ENCODE measurements at regions of chr12 and their contacts with region 1.

Region 1: GRCh38 chr12:103626498-103626897 is 39.4 kb downstream of the STAB2 start:
- DNase-seq: peak in 3 of 5 donors; percentile 31 to 47 (median 37)
- H3K4me3 ChIP-seq: no peak overlapping the region
- H3K27ac ChIP-seq: no peak overlapping the region
- H3K4me1 ChIP-seq: no peaks in the 10 kb centered on the region
- H3K27me3 ChIP-seq: no peaks in the 10 kb centered on the region
- CTCF ChIP-seq: no peak

Region 2: DNA sequence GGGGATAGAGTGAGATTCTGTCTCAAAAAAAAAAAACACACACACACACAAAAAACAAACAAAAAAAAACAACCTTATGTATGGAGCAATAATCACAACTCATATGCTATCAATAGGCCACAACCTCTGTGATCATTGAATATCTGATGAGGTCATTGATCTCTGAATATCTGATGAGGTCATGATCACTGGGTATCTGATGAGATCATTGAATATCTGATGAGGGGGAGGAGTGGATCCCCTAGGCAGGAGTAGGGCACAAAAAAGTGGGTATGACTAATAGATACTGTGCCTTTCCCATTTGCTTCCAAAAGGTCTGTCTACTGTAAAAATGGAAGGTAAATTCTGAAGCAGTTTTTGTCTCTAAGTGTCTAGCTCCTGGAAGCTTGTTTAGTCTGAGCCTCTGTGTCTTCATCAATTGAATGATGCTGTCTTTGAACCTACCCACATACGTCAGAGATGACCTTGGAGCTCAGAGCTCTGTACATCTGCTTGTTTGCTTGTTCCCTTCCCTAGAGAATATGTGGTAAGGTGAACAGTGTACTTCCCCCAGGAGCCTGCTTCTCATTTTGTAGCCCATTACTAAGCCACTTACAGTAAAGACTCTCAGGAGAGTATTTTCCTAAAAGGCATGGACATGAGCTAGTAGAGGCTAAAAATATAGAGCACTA is 723.0 kb before region 1 on chr12:
- intact Hi-C with region 1: no loop called
- DNase-seq: no peak
- H3K4me3 ChIP-seq: no peak overlapping the region
- H3K27ac ChIP-seq: no peak overlapping the region
- H3K4me1 ChIP-seq: no peaks in the 10 kb centered on the region
- H3K27me3 ChIP-seq: no peaks in the 10 kb centered on the region
- CTCF ChIP-seq: no peak

Region 3: GRCh38 chr12:103840876-103841689 is 214.6 kb after region 1 on chr12 and contains the start of gene NT5DC3:
- intact Hi-C with region 1: loop called (anchors 10 kb)
- DNase-seq: peak; percentile 85 to 95 (median 88)
- H3K4me3 ChIP-seq: peak within 1 kb of the TSS; percentile 40 to 83 (median 62)
- H3K27ac ChIP-seq: peak within 1 kb of the TSS; percentile 90 to 93
- H3K4me1 ChIP-seq: no peaks in the 10 kb centered on the region
- H3K27me3 ChIP-seq: no peaks in the 10 kb centered on the region
- CTCF ChIP-seq: peak; percentile 1
- total RNA-seq, gene NT5DC3: 7.8 TPM

Measured in kidney (tissue), 22 donors.